Right ventricle myocardium inferior (tissue), 1 donor: ENCODE measurements at regions of chr5 and their contacts with region 1.

Region 1: DNA sequence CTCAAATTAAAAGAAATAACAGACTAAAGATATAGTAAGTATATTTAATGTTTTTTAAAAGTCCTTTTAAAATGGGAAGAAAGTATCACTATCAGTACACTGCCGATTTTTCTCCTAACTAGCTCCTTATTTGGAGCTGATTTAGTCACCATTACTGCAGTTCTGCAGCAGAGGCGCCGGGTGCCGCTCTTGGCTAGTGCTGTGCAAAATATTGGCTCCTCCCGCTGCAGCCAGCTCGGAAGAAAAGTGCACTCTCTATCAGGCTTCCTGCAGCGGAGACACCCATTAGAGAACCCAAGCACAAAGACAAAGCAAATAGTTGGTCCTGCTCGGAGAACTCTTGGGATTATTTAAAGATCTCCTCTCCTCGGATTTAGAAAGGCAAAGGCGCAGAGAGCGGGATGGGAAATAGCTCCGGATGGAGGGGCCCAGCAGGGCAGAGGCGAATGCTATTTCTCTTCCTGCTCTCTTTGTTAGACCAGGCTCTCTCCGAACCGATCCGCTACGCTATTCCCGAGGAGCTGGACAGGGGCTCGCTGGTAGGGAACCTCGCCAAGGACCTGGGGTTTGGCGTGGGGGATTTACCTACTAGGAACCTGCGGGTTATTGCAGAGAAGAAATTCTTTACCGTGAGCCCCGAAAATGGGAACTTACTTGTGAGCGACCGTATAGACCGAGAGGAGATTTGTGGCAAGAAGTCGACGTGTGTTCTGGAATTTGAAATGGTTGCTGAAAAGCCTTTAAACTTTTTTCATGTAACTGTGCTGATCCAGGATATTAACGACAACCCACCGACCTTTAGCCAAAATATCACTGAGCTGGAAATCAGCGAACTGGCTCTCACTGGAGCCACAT is at the start of gene PCDHGB3:
- DNase-seq: peak; percentile 84
- ATAC-seq: peak; percentile 86
- total RNA-seq, gene PCDHGB3: 7.3 TPM

Region 2: GRCh38 chr5:141392429-141393198 is 22.4 kb after region 1 on chr5 and contains the start of gene PCDHGA8:
- intact Hi-C with region 1: loop called (anchors 1 kb)
- DNase-seq: peak; percentile 54
- ATAC-seq: no peak
- total RNA-seq, gene PCDHGA8: 9.7 TPM

Region 3: GRCh38 chr5:141412854-141413539 is 42.8 kb after region 1 on chr5 and contains the start of gene PCDHGA10:
- intact Hi-C with region 1: loop called (anchors 5 kb)
- DNase-seq: no peak
- ATAC-seq: peak; percentile 50
- total RNA-seq, gene PCDHGA10: 4.1 TPM

Region 4: DNA sequence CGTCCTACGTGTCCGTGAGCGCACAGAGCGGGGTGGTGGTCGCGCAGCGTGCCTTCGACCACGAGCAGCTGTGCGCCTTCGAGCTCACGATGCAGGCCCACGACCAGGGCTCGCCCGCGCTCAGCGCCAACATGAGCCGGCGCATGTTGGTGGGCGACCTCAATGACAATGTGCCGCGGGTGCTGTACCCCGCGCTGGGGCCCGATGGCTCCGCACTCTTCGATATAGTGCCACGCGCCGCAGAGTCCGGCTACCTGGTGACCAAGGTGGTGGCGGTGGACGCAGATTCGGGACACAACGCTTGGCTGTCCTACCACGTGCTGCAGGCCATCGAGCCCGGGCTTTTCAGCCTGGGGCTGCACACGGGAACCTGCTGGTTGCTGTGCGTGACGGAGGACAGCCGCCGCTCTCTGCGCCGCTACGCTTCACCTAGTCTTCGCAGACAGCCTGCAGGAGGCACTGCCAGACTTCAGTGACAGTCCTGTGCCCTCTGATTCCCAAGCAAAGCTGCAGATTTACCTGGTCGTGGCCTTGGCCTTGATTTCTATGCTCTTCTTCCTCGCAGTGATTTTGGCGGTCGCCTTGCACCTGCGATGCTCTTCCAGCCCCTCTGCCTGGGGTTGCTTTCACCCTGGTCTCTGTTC is 57.7 kb after region 1 on chr5:
- intact Hi-C with region 1: no loop called
- DNase-seq: no peak
- ATAC-seq: no peak